ENCODE measurements at regions of chr7 and their contacts with region 1.

Region 1: GRCh38 chr7:5854738-5855137 is 25.9 kb upstream of the OCM start:
- DNase-seq: no peak
- H3K4me3 ChIP-seq: no peak overlapping the region
- CTCF ChIP-seq: no peak

Region 2: DNA sequence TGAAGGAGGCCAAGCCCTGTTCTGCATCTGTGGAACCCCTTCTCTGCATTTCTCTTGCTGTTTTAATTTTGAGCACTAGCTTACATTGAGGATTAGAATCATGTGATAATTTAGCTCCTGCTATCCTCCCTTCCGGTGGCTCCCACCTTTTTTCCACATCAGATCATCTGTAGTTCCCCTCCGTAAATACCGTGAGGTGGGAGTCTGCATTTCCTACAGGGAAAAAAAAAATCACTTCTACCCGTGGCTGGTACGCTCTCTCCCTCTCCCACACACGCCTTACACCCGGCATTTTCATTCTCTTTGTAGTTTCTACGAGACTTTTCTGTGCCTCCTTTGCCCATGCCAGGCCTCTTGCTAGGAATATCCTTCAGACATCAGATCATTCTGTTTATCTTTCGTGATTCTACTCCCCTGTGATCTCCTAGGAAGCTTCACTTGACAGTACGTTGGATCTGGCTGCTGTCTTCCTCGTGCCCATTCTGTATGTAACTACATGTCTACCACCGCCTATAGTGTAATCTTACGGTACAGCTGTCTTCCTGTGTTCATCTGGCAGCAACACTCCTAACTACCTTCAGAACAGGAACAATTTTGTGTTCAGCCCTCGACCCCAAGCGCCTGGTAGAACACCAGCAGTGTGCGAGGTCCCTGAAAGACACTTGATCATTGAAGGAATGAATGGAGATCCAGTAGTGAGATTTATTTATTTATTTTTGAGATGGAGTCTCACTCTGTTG is 15.8 kb before region 1 on chr7:
- CTCF ChIA-PET with region 1: interaction called, 16 read pairs
- POLR2A ChIA-PET with region 1: no interaction called
- DNase-seq: no peak
- H3K4me3 ChIP-seq: no peak overlapping the region
- CTCF ChIP-seq: no peak

Region 3: GRCh38 chr7:6015917-6016652 is 161.3 kb after region 1 on chr7:
- CTCF ChIA-PET with region 1: no interaction called
- POLR2A ChIA-PET with region 1: no interaction called
- DNase-seq: peak; percentile 91
- H3K4me3 ChIP-seq: no peak overlapping the region
- CTCF ChIP-seq: no peak